ENCODE measurements at regions of chr15 and their contacts with region 1.

Region 1: GRCh38 chr15:70488002-70488605 is 275.3 kb downstream of the UACA start:
- DNase-seq: no peak
- H3K4me3 ChIP-seq: no peak overlapping the region
- H3K27ac ChIP-seq: no peak overlapping the region
- H3K27me3 ChIP-seq: peaks cover 7% of the 10 kb centered on the region
- CTCF ChIP-seq: peak; percentile 98

Region 2: GRCh38 chr15:69475769-69476358 is 1012.2 kb before region 1 on chr15:
- CTCF ChIA-PET with region 1: interaction called, 25 read pairs
- POLR2A ChIA-PET with region 1: no interaction called
- DNase-seq: no peak
- H3K4me3 ChIP-seq: no peak overlapping the region
- H3K27ac ChIP-seq: no peak overlapping the region
- H3K27me3 ChIP-seq: peaks cover 14% of the 10 kb centered on the region
- CTCF ChIP-seq: peak; percentile 99

Region 3: DNA sequence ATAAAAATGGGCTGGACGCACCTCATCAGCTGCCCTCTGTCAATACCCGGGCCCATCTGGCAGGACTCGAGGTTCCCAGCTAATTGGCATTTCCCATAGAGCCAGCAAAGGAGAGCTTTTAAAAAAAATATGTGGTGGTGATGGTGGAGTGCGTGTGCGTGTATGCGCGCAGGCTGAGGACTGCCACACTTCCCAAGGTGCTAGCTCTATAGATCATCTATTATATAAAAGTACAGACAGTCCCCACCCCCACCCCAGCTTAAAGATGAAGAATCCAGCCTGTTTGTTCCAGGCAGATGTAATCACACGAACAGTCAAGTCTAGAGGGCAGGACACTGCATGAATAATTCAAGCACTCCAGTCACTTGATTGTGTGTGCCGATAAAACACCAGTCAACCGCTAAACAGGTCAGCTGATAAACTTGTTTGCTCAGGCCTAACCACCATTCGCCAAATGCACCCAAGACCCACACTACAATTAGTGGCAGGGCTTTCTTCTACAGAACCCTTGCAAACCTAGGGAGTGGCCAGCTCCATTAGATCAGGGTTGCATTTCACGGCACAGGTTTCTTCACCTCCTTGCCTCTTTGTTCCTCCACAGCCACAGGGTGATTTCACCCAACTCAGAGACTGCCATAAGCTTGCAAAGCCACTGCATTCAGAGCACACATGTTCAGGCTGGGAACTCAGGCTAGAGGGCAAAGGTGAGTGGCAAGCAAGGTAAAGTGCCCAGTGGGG is 396.2 kb before region 1 on chr15:
- CTCF ChIA-PET with region 1: interaction called, 11 read pairs
- POLR2A ChIA-PET with region 1: no interaction called
- DNase-seq: no peak
- H3K4me3 ChIP-seq: peak overlapping the region; percentile 39
- H3K27ac ChIP-seq: peak overlapping the region; percentile 61
- H3K27me3 ChIP-seq: no peaks in the 10 kb centered on the region
- CTCF ChIP-seq: no peak

Region 4: GRCh38 chr15:70466895-70467529 is 21.1 kb before region 1 on chr15:
- CTCF ChIA-PET with region 1: interaction called, 26 read pairs
- POLR2A ChIA-PET with region 1: no interaction called
- DNase-seq: peak; percentile 26
- H3K4me3 ChIP-seq: no peak overlapping the region
- H3K27ac ChIP-seq: no peak overlapping the region
- H3K27me3 ChIP-seq: peaks cover 22% of the 10 kb centered on the region
- CTCF ChIP-seq: peak; percentile 78

Region 5: GRCh38 chr15:70474471-70475396 is 13.4 kb before region 1 on chr15:
- CTCF ChIA-PET with region 1: interaction called, 16 read pairs
- POLR2A ChIA-PET with region 1: interaction called, 7 read pairs
- DNase-seq: peak; percentile 90
- H3K4me3 ChIP-seq: peak overlapping the region; percentile 31
- H3K27ac ChIP-seq: peak overlapping the region; percentile 95
- H3K27me3 ChIP-seq: peaks cover 10% of the 10 kb centered on the region
- CTCF ChIP-seq: no peak

Region 6: DNA sequence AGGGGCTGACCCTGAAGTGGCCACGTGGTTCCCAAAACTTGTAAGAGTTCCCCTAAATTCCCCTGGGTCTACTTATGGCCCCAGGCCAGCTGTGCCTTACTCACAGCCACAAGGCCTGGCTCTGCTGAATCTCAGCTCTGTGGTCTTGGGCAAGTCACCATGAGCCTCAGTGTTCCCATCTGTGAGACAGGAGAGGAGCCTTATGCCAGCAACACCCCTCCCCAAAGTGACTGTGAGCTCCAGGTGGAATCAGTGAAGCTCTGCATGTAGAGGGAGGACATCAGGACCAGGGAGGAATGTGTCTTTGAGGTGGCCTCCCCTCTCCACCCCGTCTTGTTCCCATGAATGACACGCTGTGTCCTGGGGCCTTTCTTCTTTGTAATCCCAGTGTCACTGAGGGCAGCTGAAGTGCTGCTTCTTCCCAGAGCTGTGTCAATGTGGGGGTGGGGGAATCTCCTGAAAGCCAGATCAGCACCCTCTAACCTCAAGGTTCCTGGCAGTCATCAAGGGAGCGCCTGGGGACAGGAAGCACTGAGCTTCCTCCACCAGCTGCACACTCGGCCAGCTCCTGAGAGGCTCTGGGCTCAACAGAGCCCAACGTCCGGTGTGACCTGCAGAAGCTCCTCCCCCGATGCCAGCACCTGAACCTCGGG is 16.3 kb after region 1 on chr15:
- CTCF ChIA-PET with region 1: interaction called, 16 read pairs
- POLR2A ChIA-PET with region 1: no interaction called
- DNase-seq: no peak
- H3K4me3 ChIP-seq: no peak overlapping the region
- H3K27ac ChIP-seq: no peak overlapping the region
- H3K27me3 ChIP-seq: peaks cover 12% of the 10 kb centered on the region
- CTCF ChIP-seq: no peak

Region 7: GRCh38 chr15:70763120-70763878 is 275.2 kb after region 1 on chr15 and contains the start of gene UACA:
- CTCF ChIA-PET with region 1: no interaction called
- POLR2A ChIA-PET with region 1: no interaction called
- DNase-seq: peak; percentile 93
- H3K4me3 ChIP-seq: peak within 1 kb of the TSS; percentile 85
- H3K27ac ChIP-seq: peak within 1 kb of the TSS; percentile 71
- H3K27me3 ChIP-seq: no peaks in the 10 kb centered on the region
- CTCF ChIP-seq: no peak
- polyA plus RNA-seq, gene UACA: 133 and 134 TPM in 2 replicates